ENCODE measurements at regions of chr1 and their contacts with region 1.

Region 1: GRCh38 chr1:242784074-242784473 is 259.6 kb upstream of the PLD5 start:
- DNase-seq: peak in 1 of 10 donors; percentile 12
- H3K4me3 ChIP-seq: peak overlapping the region in 5 of 59 donors; percentile 2 to 31 (median 21)
- H3K27ac ChIP-seq: peak overlapping the region in 20 of 59 donors; percentile 6 to 79 (median 34)
- H3K27me3 ChIP-seq: no peaks in the 10 kb centered on the region
- CTCF ChIP-seq: no peak

Region 2: GRCh38 chr1:242467556-242468145 is 316.4 kb before region 1 on chr1:
- intact Hi-C with region 1: loop called in 1 of 2 experiments (anchors 5 kb)
- DNase-seq: peak in 9 of 10 donors; percentile 38 to 84 (median 60)
- H3K4me3 ChIP-seq: no peak overlapping the region
- H3K27ac ChIP-seq: no peak overlapping the region
- H3K27me3 ChIP-seq: peaks cover 0 to 4% (median 0%) of the 10 kb centered on the region in 45 donors
- CTCF ChIP-seq: peak; percentile 59 to 87 (median 78)

Region 3: GRCh38 chr1:242569867-242570266 is 214.2 kb before region 1 on chr1:
- intact Hi-C with region 1: no loop called
- DNase-seq: no peak
- H3K4me3 ChIP-seq: no peak overlapping the region
- H3K27ac ChIP-seq: no peak overlapping the region
- H3K27me3 ChIP-seq: peaks cover 0 to 10% (median 0%) of the 10 kb centered on the region in 45 donors
- CTCF ChIP-seq: no peak

Region 4: DNA sequence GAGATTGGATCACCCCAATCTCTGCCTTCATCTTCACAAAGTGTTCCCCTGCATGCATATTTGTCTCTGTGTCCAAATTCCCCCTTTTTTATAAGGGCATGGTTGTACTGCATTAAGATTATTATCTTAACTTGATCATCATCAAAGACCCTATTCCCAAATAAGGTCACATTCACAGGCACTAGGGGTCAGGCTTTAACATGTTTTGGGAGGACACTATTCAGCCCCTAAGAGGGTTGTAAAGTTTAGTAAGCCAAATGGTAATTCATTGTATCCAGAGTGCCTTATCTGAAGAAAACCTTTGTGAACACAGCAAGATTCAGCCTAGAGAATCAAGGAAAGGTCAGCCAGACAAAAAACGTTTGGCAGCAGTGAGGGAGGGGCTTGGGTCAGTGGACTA is 58.0 kb after region 1 on chr1:
- intact Hi-C with region 1: no loop called
- DNase-seq: no peak
- H3K4me3 ChIP-seq: no peak overlapping the region
- H3K27ac ChIP-seq: no peak overlapping the region
- H3K27me3 ChIP-seq: no peaks in the 10 kb centered on the region
- CTCF ChIP-seq: no peak

Measured in dorsolateral prefrontal cortex (tissue), 120 donors.